ENCODE measurements at regions of chr4 and their contacts with region 1.

Region 1: DNA sequence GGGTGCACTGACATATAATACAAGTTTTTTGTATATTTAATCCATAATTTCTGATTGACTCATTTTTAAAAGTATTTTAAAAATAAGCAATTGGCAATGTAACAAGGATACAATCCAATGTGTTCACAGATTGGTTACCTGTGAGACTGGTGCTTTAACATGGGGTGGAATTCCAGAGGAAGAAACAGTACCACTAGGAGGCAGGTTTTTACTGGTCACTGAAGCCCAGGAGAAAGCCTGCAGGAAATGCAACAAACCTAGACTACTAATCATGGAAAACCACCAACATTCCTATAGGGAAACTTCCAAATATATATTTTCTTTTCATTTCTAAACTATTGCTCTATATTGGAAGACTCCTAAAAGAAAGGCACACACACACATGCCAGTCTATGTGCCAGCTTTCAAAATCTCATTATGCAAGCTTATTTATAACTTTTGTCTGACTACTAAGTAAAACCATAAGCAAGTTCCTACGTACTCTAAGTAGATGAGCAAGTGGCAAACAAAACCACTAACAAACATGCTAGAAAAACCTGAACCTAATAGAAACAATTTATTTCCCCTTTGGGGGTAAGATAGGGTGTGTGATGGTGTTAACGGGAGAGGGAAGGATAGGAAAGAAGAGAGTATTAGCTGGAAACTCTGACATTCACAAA is 19.2 kb downstream of the G3BP2 start:
- DNase-seq: no peak
- ATAC-seq: peak; percentile 5
- H3K4me3 Mint-ChIP-seq: peak overlapping the region; percentile 53
- H3K27ac Mint-ChIP-seq: peak overlapping the region; percentile 86
- H3K4me1 Mint-ChIP-seq: peaks cover 64% of the 10 kb centered on the region
- H3K27me3 Mint-ChIP-seq: no peaks in the 10 kb centered on the region

Region 2: DNA sequence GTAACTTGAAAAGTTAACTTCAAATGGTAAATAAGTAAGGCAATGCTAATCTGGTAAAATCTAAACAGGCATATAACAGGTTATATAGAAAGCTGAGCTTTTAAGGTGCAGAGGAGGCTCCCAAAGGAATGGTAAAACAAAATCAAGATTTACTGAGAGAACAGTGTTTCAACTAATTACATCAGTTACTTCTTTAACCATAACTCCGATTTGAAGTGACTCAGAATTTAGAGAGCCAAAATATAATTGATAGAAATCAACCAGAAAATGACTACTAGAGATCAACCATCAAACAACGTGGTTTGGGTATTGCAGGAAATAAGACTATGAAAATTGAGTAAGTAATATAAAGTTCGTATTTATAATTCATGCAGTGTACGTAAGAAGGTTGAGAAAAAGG is 12.3 kb after region 1 on chr4:
- CTCF ChIA-PET with region 1: interaction called, 19 read pairs
- POLR2A ChIA-PET with region 1: interaction called, 29 read pairs
- DNase-seq: no peak
- ATAC-seq: no peak
- H3K4me3 Mint-ChIP-seq: peak overlapping the region; percentile 41
- H3K27ac Mint-ChIP-seq: peak overlapping the region; percentile 69
- H3K4me1 Mint-ChIP-seq: peaks cover 77% of the 10 kb centered on the region
- H3K27me3 Mint-ChIP-seq: no peaks in the 10 kb centered on the region

Region 3: DNA sequence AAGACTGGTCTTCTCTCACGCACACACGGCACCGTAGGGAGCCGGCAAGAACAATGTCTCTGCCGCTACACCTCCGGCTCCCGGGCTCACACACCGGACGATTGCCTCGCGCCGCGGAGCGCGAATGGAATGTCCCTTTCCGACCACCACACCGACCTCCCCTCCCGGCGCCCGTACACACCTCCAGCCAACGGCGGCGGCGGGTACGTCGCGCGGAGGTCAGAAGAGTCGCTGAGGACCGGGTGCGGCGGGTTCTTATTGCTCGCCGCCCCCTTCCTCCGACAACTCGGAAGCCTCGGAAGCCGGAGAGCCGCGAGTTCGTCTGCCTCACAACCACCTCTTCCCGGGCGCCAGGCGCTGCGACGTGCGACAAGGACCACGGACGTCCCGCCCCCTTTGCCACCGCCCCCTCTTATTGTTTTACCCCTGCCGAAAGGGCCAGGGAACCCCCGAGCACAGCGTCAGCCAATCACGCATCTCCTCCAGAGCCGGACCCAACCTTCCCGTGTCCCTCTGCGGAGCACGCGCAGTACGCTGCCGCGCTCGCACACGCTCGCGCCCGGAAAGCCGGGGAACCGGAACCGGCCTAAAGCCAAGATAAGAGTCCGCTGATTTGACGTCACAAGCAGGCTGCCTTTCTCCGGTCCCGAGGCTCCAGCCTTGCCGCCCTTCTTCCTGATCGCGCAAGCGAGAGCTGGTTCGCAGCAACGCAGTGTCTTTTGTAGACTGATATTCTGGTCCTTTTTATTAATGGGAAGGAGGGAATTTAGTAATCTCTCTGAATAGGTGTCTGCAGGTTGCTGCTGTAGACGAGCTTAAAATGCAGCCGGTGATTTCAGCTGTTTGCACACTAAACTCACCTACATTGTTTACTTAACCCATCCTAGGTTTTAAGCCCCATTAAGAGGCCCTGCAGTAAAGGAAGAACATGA is 19.3 kb after region 1 on chr4 and contains the start of gene G3BP2:
- CTCF ChIA-PET with region 1: interaction called, 19 read pairs
- POLR2A ChIA-PET with region 1: interaction called, 29 read pairs
- DNase-seq: peak; percentile 99
- ATAC-seq: peak; percentile 94
- H3K4me3 Mint-ChIP-seq: peak within 1 kb of the TSS; percentile 99
- H3K27ac Mint-ChIP-seq: peak within 1 kb of the TSS; percentile 99
- H3K4me1 Mint-ChIP-seq: peaks cover 46% of the 10 kb centered on the region
- H3K27me3 Mint-ChIP-seq: no peaks in the 10 kb centered on the region
- total RNA-seq, gene G3BP2: 173 to 178 TPM

Region 4: DNA sequence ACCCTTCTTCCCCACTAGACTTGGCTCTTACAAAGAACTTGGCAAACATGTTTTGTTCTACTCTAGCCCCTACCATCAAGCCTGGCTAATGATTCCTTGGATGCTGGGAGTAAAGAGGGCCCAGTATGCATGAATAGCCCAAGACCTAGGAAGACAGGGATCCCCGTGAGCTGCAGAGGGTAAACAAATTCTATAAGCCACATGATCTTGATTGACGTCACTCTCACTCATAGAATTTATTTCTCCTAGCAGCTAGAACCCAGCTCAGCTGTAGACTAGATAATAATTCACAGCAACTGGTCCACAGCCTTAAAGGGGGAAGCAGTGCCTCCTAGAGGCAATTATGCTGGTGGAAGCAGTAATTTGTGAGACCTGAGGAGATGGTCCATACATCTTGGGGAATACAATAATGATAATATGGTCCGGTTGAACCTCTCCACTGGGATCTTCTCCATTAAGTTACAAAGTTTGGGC is 54.3 kb after region 1 on chr4:
- CTCF ChIA-PET with region 1: interaction called, 24 read pairs
- POLR2A ChIA-PET with region 1: interaction called, 3 read pairs
- DNase-seq: peak; percentile 69
- ATAC-seq: peak; percentile 92
- H3K4me3 Mint-ChIP-seq: no peak overlapping the region
- H3K27ac Mint-ChIP-seq: no peak overlapping the region
- H3K4me1 Mint-ChIP-seq: peaks cover 20% of the 10 kb centered on the region
- H3K27me3 Mint-ChIP-seq: no peaks in the 10 kb centered on the region

Measured in activated CD8-positive, alpha-beta T cell treated with anti-CD3 and anti-CD28 coated beads, Interleukin-2, amount 10 ng/mL, durations not matched to agents 7 days and 5 days (primary cell).